ENCODE measurements at regions of chr15 and their contacts with region 1.

Region 1: DNA sequence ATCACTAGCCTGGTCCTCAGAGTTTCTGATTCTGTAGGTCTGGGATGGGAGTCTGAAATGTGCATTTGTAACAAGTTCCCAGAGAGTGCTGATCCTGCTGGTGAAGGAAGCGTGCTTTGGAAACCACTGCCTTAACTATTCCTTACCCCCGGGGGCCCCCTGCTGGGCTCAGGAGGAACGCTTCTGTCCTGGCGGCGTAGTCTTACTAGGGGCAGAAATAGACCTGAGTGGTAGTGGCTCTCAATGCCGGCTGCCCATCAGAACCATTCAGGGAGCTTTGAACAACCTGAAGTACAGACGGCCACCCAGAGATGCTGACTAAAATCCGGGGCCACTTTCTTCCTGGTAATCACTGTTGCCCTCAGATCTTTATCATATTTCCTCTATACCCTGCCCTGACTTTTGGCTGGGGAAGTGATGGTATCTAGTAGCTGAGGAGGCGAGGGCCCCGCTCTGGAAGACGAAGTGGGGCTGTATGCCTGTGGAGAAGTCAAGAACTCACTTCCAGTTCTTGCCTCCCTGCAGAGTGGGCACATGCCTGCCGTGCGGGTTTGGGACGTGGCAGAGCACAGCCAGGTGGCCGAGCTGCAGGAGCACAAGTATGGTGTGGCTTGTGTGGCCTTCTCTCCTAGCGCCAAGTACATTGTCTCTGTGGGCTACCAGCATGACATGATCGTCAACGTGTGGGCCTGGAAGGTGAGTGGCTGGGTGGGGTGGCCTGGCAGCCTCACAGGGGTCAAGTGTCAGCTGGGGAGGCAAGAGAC is 16.3 kb upstream of the JMJD7 start:
- DNase-seq: peak; percentile 60
- ATAC-seq: peak; percentile 97
- H3K4me3 ChIP-seq: no peak overlapping the region
- H3K27ac ChIP-seq: no peak overlapping the region
- H3K4me1 ChIP-seq: no peaks in the 10 kb centered on the region; the same call in 1 of the 2 replicates
- H3K27me3 ChIP-seq: no peaks in the 10 kb centered on the region
- CTCF ChIP-seq: peak; percentile 93

Region 2: GRCh38 chr15:41585127-41586047 is 226.2 kb before region 1 on chr15:
- CTCF ChIA-PET with region 1: interaction called, 17 read pairs
- POLR2A ChIA-PET with region 1: no interaction called
- in situ Hi-C with region 1: no loop called
- intact Hi-C with region 1: no loop called
- DNase-seq: peak; percentile 20
- ATAC-seq: peak; percentile 91
- H3K4me3 ChIP-seq: peak overlapping the region; percentile 43 to 76
- H3K27ac ChIP-seq: peak overlapping the region; percentile 88
- H3K4me1 ChIP-seq: no peaks in the 10 kb centered on the region
- H3K27me3 ChIP-seq: no peaks in the 10 kb centered on the region
- CTCF ChIP-seq: peak; percentile 68

Region 3: GRCh38 chr15:41603941-41604911 is 207.4 kb before region 1 on chr15:
- CTCF ChIA-PET with region 1: interaction called, 7 read pairs
- POLR2A ChIA-PET with region 1: no interaction called
- in situ Hi-C with region 1: no loop called
- intact Hi-C with region 1: loop called (anchors 10 kb)
- DNase-seq: peak; percentile 68
- ATAC-seq: peak; percentile 98
- H3K4me3 ChIP-seq: peak overlapping the region; percentile 19 to 57
- H3K27ac ChIP-seq: peak overlapping the region; percentile 2; the same call in 1 of the 2 replicates
- H3K4me1 ChIP-seq: peaks cover 14% of the 10 kb centered on the region
- H3K27me3 ChIP-seq: no peaks in the 10 kb centered on the region
- CTCF ChIP-seq: peak; percentile 95

Region 4: GRCh38 chr15:41774062-41774881 is 37.3 kb before region 1 on chr15 and contains the start of gene MAPKBP1:
- CTCF ChIA-PET with region 1: interaction called, 20 read pairs
- POLR2A ChIA-PET with region 1: interaction called, 4 read pairs
- in situ Hi-C with region 1: no loop called
- intact Hi-C with region 1: loop called (anchors 1 kb)
- DNase-seq: peak; percentile 91
- ATAC-seq: peak; percentile 95
- H3K4me3 ChIP-seq: peak within 1 kb of the TSS; percentile 65 to 99
- H3K27ac ChIP-seq: peak within 1 kb of the TSS; percentile 93
- H3K4me1 ChIP-seq: peaks cover 39% of the 10 kb centered on the region
- H3K27me3 ChIP-seq: no peaks in the 10 kb centered on the region
- CTCF ChIP-seq: peak; percentile 74
- total RNA-seq, gene MAPKBP1: 38.4 TPM

Region 5: DNA sequence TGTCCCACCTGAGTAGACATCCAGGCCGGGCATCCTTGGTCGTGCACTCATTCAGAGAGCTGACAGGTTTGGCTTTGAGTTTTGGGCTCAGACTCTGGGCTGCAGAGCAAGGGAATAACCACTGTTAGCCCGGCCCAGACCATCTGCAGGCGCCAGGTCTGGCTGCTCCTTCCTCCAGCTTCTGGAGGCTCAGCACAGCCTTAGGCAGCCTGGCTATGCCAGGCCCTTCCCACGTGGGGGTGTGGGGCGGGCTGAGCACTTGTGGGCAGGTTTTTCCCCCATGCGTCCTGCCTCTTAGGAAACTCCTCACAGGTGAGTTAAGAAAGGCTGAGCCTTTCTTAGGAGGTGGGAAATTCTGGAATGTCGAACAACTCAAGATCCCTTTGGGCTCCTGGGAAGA is 38.2 kb after region 1 on chr15:
- CTCF ChIA-PET with region 1: no interaction called
- POLR2A ChIA-PET with region 1: interaction called, 16 read pairs
- in situ Hi-C with region 1: no loop called
- intact Hi-C with region 1: no loop called
- DNase-seq: no peak
- ATAC-seq: no peak; the same call in 1 of the 2 replicates
- H3K4me3 ChIP-seq: no peak overlapping the region
- H3K27ac ChIP-seq: no peak overlapping the region
- H3K4me1 ChIP-seq: no peaks in the 10 kb centered on the region
- H3K27me3 ChIP-seq: no peaks in the 10 kb centered on the region
- CTCF ChIP-seq: no peak

Region 6: GRCh38 chr15:41957021-41957897 is 145.6 kb after region 1 on chr15:
- CTCF ChIA-PET with region 1: no interaction called
- POLR2A ChIA-PET with region 1: no interaction called
- in situ Hi-C with region 1: no loop called
- intact Hi-C with region 1: no loop called
- DNase-seq: no peak
- ATAC-seq: peak; percentile 51
- H3K4me3 ChIP-seq: no peak overlapping the region
- H3K27ac ChIP-seq: peak overlapping the region; percentile 55; the same call in 1 of the 2 replicates
- H3K4me1 ChIP-seq: peaks cover 43% of the 10 kb centered on the region
- H3K27me3 ChIP-seq: no peaks in the 10 kb centered on the region
- CTCF ChIP-seq: no peak

Measured in Panc1 (cell line).